Psoas muscle (tissue), 8 donors: ENCODE measurements at regions of chr2 and their contacts with region 1.

Region 1: DNA sequence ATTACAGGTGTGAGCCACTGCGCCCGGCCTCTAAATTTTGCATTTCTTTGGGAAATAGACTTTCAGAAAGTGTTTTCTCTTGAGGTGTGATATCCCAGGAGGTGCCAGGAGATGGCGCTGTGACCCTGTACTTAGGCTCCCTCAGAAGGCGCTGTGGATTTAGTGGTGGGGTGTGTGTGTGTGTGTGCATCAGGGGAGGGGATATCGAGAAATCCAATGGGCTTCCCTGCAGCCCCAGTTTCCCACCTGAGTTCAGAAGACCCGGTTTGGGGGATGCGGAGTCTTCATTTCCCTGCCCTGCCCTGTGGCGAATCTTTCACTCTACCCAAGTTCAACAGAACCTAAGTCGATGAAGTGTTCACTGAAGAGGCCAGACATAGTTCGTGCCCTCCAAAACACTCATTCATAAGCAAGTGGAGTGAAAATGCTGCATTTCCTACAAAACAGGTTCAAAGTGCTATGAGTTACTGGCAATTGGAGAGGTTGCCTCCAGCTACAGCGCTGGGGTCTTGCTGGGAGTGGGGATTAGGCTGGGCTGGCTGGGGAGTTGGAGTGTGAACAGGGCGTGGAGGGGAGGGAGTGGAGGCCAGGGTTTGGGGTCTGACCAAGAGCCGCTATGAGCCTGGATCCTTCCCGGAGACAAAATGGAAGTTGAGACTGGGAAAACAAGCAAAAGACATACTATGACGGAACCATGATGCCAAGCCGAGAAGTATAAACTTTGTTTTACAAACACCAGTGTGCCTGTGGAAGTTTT is 6.5 kb upstream of the WNT6 start:
- DNase-seq: peak; percentile 55 to 75
- ATAC-seq: peak; percentile 75 to 87 (median 76)
- H3K4me3 ChIP-seq: no peak overlapping the region
- H3K27ac ChIP-seq: no peak overlapping the region
- H3K4me1 ChIP-seq: no peaks in the 10 kb centered on the region
- H3K27me3 ChIP-seq: peaks cover 0 to 30% (median 3%) of the 10 kb centered on the region in 3 donors
- CTCF ChIP-seq: peak; percentile 69

Region 2: GRCh38 chr2:218727502-218728165 is 125.5 kb before region 1 on chr2:
- intact Hi-C with region 1: loop called in 1 of 2 experiments (anchors 2 kb)
- DNase-seq: no peak
- ATAC-seq: peak in 2 of 4 donors; percentile 54 to 74
- H3K4me3 ChIP-seq: no peak overlapping the region
- H3K27ac ChIP-seq: no peak overlapping the region
- H3K4me1 ChIP-seq: peaks cover 11% of the 10 kb centered on the region
- H3K27me3 ChIP-seq: no peaks in the 10 kb centered on the region
- CTCF ChIP-seq: peak; percentile 47